ENCODE measurements at regions of chr7 and their contacts with region 1.

Region 1: DNA sequence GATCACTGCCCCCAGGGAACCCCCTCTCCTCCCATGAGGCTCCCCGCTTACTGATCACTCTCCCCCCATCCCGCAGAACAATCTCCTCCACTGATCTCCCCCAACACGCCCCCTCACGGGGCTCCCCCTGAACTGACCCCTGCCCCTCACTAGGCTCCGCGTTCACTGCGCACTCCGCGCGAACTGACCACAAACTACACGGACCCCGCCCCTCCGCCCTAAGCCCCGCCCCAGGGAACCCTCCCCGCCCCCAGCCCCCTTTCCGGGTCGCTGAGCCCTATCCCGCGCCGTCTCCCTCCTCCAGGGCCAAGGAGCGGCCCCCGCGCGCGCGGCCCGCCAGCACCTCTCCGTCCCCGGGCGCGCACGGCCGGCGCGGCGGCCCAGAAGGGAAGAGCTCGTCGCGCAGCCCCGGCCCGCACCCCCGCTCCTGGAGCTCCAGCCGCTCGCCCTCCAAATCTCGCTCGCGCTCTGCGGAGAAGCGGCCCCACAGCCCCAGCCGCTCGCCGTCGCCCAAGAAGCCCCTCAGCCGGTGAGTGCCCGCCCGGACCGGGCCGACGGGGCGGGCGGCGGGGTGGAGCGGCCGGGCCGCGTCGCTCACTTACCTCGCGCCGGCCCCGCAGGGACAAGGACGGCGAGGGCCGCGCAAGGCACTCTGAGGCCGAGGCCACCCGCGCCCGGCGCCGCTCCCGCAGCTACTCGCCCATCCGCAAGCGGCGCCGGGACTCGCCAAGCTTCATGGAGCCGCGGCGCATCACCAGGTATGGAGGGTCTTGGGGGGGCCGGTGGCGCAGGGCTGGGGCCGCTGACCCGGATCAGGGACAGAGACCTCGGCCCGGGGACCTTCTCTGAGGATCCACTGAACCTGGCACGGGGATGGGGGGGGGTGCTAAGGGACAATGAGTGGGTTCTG is 19.9 kb upstream of the HSPB1 start:
- DNase-seq: peak; percentile 67 to 74 (median 73)
- H3K4me3 ChIP-seq: peak overlapping the region; percentile 58
- H3K27ac ChIP-seq: peak overlapping the region in 1 of 2 donors; percentile 85
- H3K4me1 ChIP-seq: peaks cover 2% of the 10 kb centered on the region
- H3K27me3 ChIP-seq: no peaks in the 10 kb centered on the region
- CTCF ChIP-seq: no peak
- EP300 ChIP-seq: no peak
- POLR2A ChIP-seq: no peak

Region 2: DNA sequence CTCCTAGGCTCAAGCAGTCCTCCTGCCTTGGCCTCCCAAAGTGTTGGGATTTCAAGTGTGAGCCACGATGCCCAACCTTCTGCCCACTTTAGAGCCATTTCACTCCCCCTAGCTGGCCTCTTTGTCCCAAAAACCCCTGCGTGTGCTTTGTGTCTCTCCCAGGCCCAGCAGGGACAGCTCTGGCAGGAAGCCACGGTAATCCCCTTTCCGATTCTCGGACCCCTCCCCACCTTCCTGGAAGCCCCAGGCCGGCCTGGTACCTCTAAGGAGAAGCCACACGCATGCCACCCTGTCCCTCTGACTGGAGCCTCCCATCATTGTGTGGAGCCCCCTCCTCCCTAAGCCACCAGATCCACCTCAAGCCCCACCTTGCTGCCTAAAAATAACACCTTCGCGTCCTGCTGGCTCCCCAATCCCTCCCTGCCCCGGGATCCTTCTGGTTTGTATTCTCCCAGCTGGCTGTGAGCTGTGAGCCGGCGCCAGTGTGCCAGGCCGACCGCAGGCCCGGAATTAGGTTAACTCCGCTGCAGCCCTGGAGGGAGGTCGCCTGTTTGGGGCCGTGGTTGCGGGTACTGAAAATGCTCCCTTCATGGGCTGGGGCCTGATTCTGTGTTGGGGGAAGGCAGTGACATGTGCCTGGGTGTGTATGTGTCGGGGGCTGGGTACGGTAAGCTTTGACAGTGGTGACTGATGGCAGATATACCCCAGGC is 97.3 kb before region 1 on chr7:
- intact Hi-C with region 1: loop called in 1 of 4 experiments (anchors 10 kb)
- DNase-seq: no peak
- H3K4me3 ChIP-seq: no peak overlapping the region
- H3K27ac ChIP-seq: no peak overlapping the region
- H3K4me1 ChIP-seq: no peaks in the 10 kb centered on the region
- H3K27me3 ChIP-seq: no peaks in the 10 kb centered on the region
- CTCF ChIP-seq: no peak
- EP300 ChIP-seq: no peak
- POLR2A ChIP-seq: no peak